AG04449 (cell line): ENCODE measurements at regions of chr6 and their contacts with region 1.

Region 1: GRCh38 chr6:3403238-3404173 is 53.3 kb downstream of the SLC22A23 start:
- DNase-seq: no peak
- H3K4me3 ChIP-seq: no peak overlapping the region
- CTCF ChIP-seq: no peak

Region 2: DNA sequence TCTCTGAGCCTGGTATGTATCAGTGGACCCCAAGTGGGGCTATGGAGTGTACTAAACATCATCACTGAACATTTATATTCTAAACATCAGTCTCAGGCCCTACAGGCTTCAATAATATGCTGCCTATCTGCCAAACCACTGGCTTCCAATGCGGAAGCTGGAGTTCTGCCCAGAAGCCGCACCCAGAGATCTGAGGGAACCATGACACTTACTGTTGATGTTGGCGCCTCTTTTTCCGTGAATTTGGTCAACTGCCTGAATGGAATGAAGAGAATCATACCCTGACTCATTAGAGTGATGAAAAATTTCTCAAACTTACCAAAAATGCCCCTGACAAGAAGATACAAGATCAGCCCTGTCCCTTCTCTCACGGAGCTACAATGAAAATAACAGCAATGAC is 12.8 kb before region 1 on chr6:
- CTCF ChIA-PET with region 1: interaction called, 11 read pairs
- POLR2A ChIA-PET with region 1: no interaction called
- DNase-seq: peak; percentile 89
- H3K4me3 ChIP-seq: no peak overlapping the region
- CTCF ChIP-seq: no peak

Region 3: DNA sequence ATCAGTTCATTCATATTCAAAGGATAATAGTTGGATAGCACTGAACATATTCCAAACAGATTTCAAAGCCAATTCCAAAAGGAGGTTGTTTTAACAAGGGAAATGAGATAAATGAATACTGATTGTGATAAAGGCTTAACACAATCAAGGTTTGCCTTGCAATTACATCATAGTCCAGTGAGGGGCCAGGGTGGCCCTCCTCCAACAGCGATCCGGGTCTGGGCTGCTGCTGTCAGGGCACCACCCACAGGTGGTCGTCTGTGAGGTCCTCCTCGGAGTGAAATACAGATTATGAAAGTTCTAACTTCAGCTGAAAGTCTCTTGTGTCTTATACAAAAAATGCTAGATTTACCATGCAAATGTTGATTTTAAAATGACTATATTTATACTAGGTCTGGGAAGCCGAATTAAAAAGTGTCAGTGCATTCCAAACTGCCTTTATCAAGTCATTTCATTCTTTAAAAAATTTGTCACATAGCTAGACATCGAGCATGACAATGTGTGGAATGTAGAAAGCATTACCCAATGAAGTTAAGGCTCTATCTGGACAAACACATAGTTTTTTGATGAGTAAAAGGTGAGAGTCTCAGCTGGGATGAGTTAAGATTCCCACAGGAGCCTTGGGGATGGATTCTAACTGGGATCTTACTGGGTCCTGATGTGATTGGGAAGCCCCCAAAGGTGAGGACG is 119.2 kb after region 1 on chr6:
- CTCF ChIA-PET with region 1: no interaction called
- POLR2A ChIA-PET with region 1: no interaction called
- DNase-seq: peak; percentile 50
- H3K4me3 ChIP-seq: no peak overlapping the region
- CTCF ChIP-seq: no peak